ENCODE measurements at regions of chr6 and their contacts with region 1.

Region 1: DNA sequence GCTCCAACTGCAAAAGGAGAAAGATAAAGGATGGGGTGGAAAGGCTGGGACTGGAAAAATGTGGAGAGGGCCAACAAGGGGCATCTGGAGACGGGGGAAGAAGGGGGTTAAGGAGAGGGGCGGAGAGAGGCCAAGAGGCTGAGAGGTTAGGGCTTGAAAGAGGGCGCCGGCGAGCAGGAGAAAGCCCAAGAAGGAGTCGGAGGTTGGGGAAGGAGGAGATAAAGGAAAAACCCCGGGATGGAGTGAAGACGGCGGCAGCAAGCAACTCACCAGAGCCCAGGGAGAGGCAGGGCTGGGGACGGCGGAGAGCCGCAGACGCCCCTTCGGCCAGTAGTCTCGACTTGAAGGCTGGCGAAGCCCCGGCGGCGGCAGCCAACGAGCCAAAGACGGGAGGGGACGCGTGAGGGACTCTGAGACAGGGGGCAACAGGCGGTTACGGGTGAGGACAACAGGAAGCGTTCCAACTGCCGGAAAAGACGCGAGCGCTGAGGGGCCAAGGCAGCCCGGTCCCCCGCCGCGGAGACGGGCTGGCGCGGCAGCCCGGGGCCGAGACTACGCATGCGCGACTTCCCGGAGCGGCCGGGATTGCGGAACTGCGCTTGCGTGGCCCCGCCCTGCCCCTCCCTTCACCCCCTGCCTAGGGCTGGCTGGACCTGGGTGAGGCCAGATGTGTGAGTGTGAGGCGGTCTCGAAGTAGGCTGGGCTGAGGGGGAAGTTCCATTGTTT is at the start of gene STK38:
- DNase-seq: peak; percentile 94 to 97 (median 97)
- ATAC-seq: peak; percentile 97 to 98
- H3K4me3 ChIP-seq: peak within 1 kb of the TSS; percentile 97
- H3K27ac ChIP-seq: peak within 1 kb of the TSS; percentile 98
- H3K4me1 ChIP-seq: peaks cover 5% of the 10 kb centered on the region
- H3K27me3 ChIP-seq: no peaks in the 10 kb centered on the region
- total RNA-seq, gene STK38: 20.0 to 23.7 (median 22.7) TPM

Region 2: GRCh38 chr6:36504982-36505381 is 42.1 kb before region 1 on chr6:
- intact Hi-C with region 1: no loop called
- DNase-seq: no peak
- ATAC-seq: no peak
- H3K4me3 ChIP-seq: no peak overlapping the region
- H3K27ac ChIP-seq: no peak overlapping the region
- H3K4me1 ChIP-seq: no peaks in the 10 kb centered on the region
- H3K27me3 ChIP-seq: no peaks in the 10 kb centered on the region

Region 3: GRCh38 chr6:36586606-36587005 is 39.5 kb after region 1 on chr6:
- intact Hi-C with region 1: loop called in 3 of 4 experiments (anchors 5 to 10 kb)
- DNase-seq: no peak
- ATAC-seq: no peak
- H3K4me3 ChIP-seq: no peak overlapping the region
- H3K27ac ChIP-seq: no peak overlapping the region
- H3K4me1 ChIP-seq: no peaks in the 10 kb centered on the region
- H3K27me3 ChIP-seq: no peaks in the 10 kb centered on the region

Region 4: GRCh38 chr6:36594029-36594815 is 47.1 kb after region 1 on chr6 and contains the start of gene SRSF3:
- intact Hi-C with region 1: loop called in 3 of 4 experiments (anchors 5 to 10 kb)
- DNase-seq: peak; percentile 97 to 98 (median 98)
- ATAC-seq: peak; percentile 98 to 99
- H3K4me3 ChIP-seq: peak within 1 kb of the TSS; percentile 99
- H3K27ac ChIP-seq: peak within 1 kb of the TSS; percentile 96
- H3K4me1 ChIP-seq: peaks cover 6% of the 10 kb centered on the region
- H3K27me3 ChIP-seq: no peaks in the 10 kb centered on the region
- total RNA-seq, gene SRSF3: 144 to 185 (median 151) TPM

Measured in right cardiac atrium (tissue), 5 donors.